ENCODE measurements at regions of chr6 and their contacts with region 1.

Region 1: GRCh38 chr6:37207903-37208456 is 38.0 kb downstream of the PIM1 start:
- DNase-seq: peak; percentile 80 to 90 (median 84)
- H3K4me3 ChIP-seq: no peak overlapping the region
- H3K4me3 Mint-ChIP-seq: peak overlapping the region; percentile 26 to 74 (median 54)
- H3K27ac ChIP-seq: no peak overlapping the region
- H3K27ac Mint-ChIP-seq: peak overlapping the region; percentile 57 to 98 (median 86)
- H3K4me1 ChIP-seq: peaks cover 48% of the 10 kb centered on the region
- H3K4me1 Mint-ChIP-seq: peaks cover 39 to 58% (median 48%) of the 10 kb centered on the region in 4 donors
- H3K27me3 ChIP-seq: no peaks in the 10 kb centered on the region
- H3K27me3 Mint-ChIP-seq: no peaks in the 10 kb centered on the region

Region 2: GRCh38 chr6:36765594-36766398 is 442.2 kb before region 1 on chr6:
- CTCF ChIA-PET with region 1: interaction called, 28 read pairs
- POLR2A ChIA-PET with region 1: no interaction called
- intact Hi-C with region 1: loop called (anchors 2 kb)
- DNase-seq: peak; percentile 75 to 80 (median 78)
- H3K4me3 ChIP-seq: no peak overlapping the region
- H3K4me3 Mint-ChIP-seq: peak overlapping the region in 2 of 8 donors; percentile 11 to 28
- H3K27ac ChIP-seq: no peak overlapping the region
- H3K27ac Mint-ChIP-seq: peak overlapping the region in 5 of 7 donors; percentile 11 to 66 (median 50)
- H3K4me1 ChIP-seq: peaks cover 45% of the 10 kb centered on the region
- H3K4me1 Mint-ChIP-seq: peaks cover 27 to 37% (median 31%) of the 10 kb centered on the region in 4 donors
- H3K27me3 ChIP-seq: no peaks in the 10 kb centered on the region
- H3K27me3 Mint-ChIP-seq: no peaks in the 10 kb centered on the region

Region 3: DNA sequence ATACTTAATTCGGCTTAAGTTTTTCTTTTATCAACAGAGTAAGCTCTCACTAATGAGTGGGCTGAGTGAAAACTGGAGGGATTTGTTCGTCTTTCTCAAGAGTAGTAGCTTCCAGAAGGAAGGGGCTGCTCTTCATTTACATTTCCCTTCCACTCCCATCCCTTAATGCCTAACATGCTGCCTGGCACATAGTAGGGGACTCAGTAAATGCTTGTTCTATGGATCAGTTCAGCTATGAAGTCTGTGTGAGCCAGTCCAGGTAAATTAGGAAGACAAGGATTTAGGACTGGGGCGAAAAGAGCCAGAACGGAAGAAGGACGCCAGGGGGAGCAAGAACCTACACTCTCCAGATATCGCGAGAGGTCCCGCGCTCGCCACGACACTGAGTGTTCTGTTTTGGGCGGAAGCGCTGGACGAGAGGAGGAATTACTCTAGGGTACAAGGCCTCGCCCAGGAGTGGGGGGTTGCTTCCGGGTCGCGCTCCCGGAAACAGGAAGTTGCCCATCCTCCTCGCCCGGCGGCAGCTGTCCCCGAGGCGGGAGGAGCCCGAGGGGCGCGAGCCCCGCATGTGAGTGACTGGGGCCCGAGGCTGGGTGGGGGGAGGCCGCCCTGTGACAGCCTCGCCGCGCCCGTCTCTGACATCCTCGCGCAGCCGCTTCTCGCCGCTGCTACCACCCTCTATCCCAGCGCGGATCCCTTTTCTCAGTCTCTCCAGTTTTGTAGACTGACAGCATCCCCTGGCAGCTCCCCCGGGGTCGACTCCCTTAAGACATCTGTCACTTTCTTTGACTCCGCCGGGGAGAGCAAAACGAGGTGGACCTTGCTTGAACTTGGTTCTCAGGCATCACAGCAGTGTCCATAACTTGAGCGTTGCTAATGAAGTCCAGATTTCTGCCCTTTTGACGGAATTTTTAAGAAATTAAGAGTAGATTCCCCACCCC is 322.2 kb before region 1 on chr6 and contains the start of gene C6orf89:
- CTCF ChIA-PET with region 1: interaction called, 54 read pairs
- POLR2A ChIA-PET with region 1: interaction called, 7 read pairs
- intact Hi-C with region 1: loop called (anchors 1 kb)
- DNase-seq: peak; percentile 95 to 98 (median 97)
- H3K4me3 ChIP-seq: peak within 1 kb of the TSS; percentile 71 to 84
- H3K4me3 Mint-ChIP-seq: peak within 1 kb of the TSS; percentile 82 to 93 (median 90)
- H3K27ac ChIP-seq: peak within 1 kb of the TSS; percentile 85
- H3K27ac Mint-ChIP-seq: peak within 1 kb of the TSS; percentile 94 to 98 (median 96)
- H3K4me1 ChIP-seq: peaks cover 50% of the 10 kb centered on the region
- H3K4me1 Mint-ChIP-seq: peaks cover 23 to 51% (median 39%) of the 10 kb centered on the region in 4 donors
- H3K27me3 ChIP-seq: no peaks in the 10 kb centered on the region
- H3K27me3 Mint-ChIP-seq: no peaks in the 10 kb centered on the region
- total RNA-seq, gene C6orf89: 53.0 to 56.0 TPM

Region 4: DNA sequence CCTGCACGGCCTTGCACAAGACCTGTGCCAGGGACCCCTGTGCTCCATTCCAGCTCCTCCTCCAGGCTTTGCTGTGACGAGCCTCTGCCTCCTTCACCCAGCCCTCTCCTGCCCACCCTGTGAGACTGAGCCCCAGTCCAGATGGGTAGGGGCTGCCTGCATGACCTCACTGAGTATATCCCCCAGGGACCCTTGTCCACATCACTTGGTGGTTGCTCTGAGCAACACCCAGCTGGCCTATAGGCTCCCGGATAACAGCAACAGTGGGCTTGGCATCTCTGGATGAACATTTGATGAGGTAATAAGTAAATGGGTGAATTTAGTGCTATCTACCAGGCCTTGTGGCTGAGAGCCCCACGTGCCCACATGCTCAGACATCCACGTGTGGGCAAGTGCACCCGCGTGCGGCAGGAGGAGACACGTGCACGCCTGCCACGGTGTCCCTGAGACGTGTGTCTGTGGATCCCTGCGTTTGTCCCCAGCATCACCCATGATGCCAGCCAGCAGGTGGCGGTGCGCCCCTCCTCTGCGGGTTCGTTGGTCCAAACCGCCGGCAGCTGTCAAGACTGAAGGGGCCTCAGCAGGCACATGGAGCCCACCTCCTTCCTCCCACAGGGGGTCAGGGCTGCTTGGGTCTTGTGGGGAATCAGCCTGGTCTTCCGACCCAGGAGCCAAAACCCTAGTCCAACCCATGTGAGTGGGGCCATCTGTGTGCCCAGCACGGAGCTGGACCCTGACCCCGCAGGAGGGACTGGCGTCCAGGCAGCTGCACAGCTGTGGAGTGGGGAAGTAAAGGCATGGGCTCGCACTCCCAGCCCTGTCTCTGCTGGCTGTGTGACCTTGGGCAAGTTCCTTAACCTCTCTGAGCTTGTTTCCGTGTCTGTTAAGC is 156.6 kb before region 1 on chr6:
- CTCF ChIA-PET with region 1: interaction called, 164 read pairs
- POLR2A ChIA-PET with region 1: interaction called, 54 read pairs
- intact Hi-C with region 1: loop called (anchors 1 kb)
- DNase-seq: peak; percentile 84 to 91 (median 84)
- H3K4me3 ChIP-seq: no peak overlapping the region
- H3K4me3 Mint-ChIP-seq: peak overlapping the region; percentile 38 to 92 (median 68)
- H3K27ac ChIP-seq: peak overlapping the region; percentile 72
- H3K27ac Mint-ChIP-seq: peak overlapping the region; percentile 31 to 94 (median 92)
- H3K4me1 ChIP-seq: peaks cover 60% of the 10 kb centered on the region
- H3K4me1 Mint-ChIP-seq: peaks cover 50 to 62% (median 55%) of the 10 kb centered on the region in 4 donors
- H3K27me3 ChIP-seq: no peaks in the 10 kb centered on the region
- H3K27me3 Mint-ChIP-seq: no peaks in the 10 kb centered on the region

Region 5: GRCh38 chr6:37177077-37177934 is 30.7 kb before region 1 on chr6:
- CTCF ChIA-PET with region 1: interaction called, 315 read pairs
- POLR2A ChIA-PET with region 1: interaction called, 129 read pairs
- intact Hi-C with region 1: loop called (anchors 1 kb)
- DNase-seq: no peak
- H3K4me3 ChIP-seq: no peak overlapping the region
- H3K4me3 Mint-ChIP-seq: peak overlapping the region in 7 of 8 donors; percentile 18 to 46 (median 28)
- H3K27ac ChIP-seq: no peak overlapping the region
- H3K27ac Mint-ChIP-seq: peak overlapping the region; percentile 47 to 94 (median 86)
- H3K4me1 ChIP-seq: peaks cover 87% of the 10 kb centered on the region
- H3K4me1 Mint-ChIP-seq: peaks cover 50 to 91% (median 66%) of the 10 kb centered on the region in 4 donors
- H3K27me3 ChIP-seq: no peaks in the 10 kb centered on the region
- H3K27me3 Mint-ChIP-seq: no peaks in the 10 kb centered on the region

Region 6: GRCh38 chr6:37190159-37190535 is 17.8 kb before region 1 on chr6:
- CTCF ChIA-PET with region 1: interaction called, 58 read pairs
- POLR2A ChIA-PET with region 1: interaction called, 15 read pairs
- intact Hi-C with region 1: no loop called
- DNase-seq: no peak
- H3K4me3 ChIP-seq: no peak overlapping the region
- H3K4me3 Mint-ChIP-seq: peak overlapping the region in 4 of 8 donors; percentile 10 to 52 (median 25)
- H3K27ac ChIP-seq: no peak overlapping the region
- H3K27ac Mint-ChIP-seq: peak overlapping the region in 3 of 7 donors; percentile 47 to 68 (median 57)
- H3K4me1 ChIP-seq: peaks cover 65% of the 10 kb centered on the region
- H3K4me1 Mint-ChIP-seq: peaks cover 30 to 55% (median 39%) of the 10 kb centered on the region in 4 donors
- H3K27me3 ChIP-seq: no peaks in the 10 kb centered on the region
- H3K27me3 Mint-ChIP-seq: no peaks in the 10 kb centered on the region

Measured in CD4-positive, alpha-beta memory T cell (primary cell).